A673 (cell line): ENCODE measurements at regions of chr16 and their contacts with region 1.

Region 1: DNA sequence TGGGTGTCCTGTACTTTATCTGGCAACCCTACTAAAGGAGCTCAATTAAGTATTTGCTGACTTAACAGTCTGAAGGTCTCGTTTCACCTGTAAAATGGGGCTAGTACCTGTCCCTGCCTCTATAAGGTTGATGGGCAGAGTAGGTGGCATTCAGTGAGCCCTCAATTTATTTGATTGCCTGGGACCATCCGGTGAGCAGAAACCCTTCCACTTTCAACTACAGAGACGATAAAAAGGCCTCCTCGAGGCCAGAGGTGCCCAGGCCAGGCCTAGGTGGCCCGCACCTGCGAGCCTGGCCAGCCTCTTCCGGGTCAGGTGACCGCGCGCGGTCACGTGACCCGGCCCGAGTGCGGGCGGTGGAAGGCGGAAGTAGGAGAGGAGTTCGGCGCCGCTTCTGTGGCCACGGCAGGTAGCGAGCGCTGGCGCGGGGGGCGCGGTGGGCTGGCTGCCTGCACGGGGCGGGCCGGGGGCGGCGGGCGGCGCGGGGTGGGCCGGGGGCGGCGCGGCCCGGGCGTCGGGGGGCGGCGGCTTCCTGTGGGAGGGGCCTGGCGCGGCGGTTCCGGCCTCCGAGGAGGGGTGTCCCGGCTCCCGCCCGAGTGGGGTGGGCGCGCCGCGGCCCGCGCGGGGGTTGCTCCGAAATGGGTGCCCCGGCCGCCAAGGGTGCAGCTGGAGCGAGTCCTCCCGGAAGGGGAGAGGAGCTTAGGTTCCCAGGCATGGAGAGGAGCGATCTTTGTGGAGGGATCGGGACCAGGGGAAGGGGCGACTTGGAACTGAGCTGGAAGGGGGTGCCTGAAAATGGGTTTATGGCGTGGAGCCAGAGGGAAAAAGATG is at the start of gene WWP2:
- DNase-seq: peak; percentile 86
- H3K4me3 ChIP-seq: peak within 1 kb of the TSS; percentile 89
- H3K27ac ChIP-seq: peak within 1 kb of the TSS; percentile 78
- H3K4me1 ChIP-seq: no peaks in the 10 kb centered on the region
- H3K27me3 ChIP-seq: no peaks in the 10 kb centered on the region
- CTCF ChIP-seq: no peak
- total RNA-seq, gene WWP2: 32.4 and 38.5 TPM in 2 replicates

Region 2: GRCh38 chr16:69903865-69904415 is 141.7 kb after region 1 on chr16:
- CTCF ChIA-PET with region 1: no interaction called
- POLR2A ChIA-PET with region 1: interaction called, 11 read pairs
- intact Hi-C with region 1: no loop called
- DNase-seq: no peak
- H3K4me3 ChIP-seq: no peak overlapping the region
- H3K27ac ChIP-seq: no peak overlapping the region
- H3K4me1 ChIP-seq: no peaks in the 10 kb centered on the region
- H3K27me3 ChIP-seq: no peaks in the 10 kb centered on the region
- CTCF ChIP-seq: no peak